Panc1 (cell line): ENCODE measurements at regions of chr20 and their contacts with region 1.

Region 1: GRCh38 chr20:1240549-1240948 is 14.7 kb downstream of the RAD21L1 start:
- DNase-seq: no peak
- ATAC-seq: no peak
- H3K4me3 ChIP-seq: no peak overlapping the region
- H3K27ac ChIP-seq: no peak overlapping the region
- H3K4me1 ChIP-seq: no peaks in the 10 kb centered on the region
- H3K27me3 ChIP-seq: no peaks in the 10 kb centered on the region
- CTCF ChIP-seq: no peak

Region 2: GRCh38 chr20:1072258-1072657 is 168.3 kb before region 1 on chr20:
- CTCF ChIA-PET with region 1: no interaction called
- POLR2A ChIA-PET with region 1: no interaction called
- in situ Hi-C with region 1: no loop called
- intact Hi-C with region 1: no loop called
- DNase-seq: no peak
- ATAC-seq: no peak
- H3K4me3 ChIP-seq: no peak overlapping the region
- H3K27ac ChIP-seq: no peak overlapping the region
- H3K4me1 ChIP-seq: no peaks in the 10 kb centered on the region
- H3K27me3 ChIP-seq: peaks cover 2% of the 10 kb centered on the region
- CTCF ChIP-seq: no peak

Region 3: GRCh38 chr20:1274485-1275311 is 34.1 kb after region 1 on chr20:
- CTCF ChIA-PET with region 1: no interaction called
- POLR2A ChIA-PET with region 1: no interaction called
- in situ Hi-C with region 1: no loop called
- intact Hi-C with region 1: no loop called
- DNase-seq: no peak
- ATAC-seq: peak; percentile 47
- H3K4me3 ChIP-seq: no peak overlapping the region
- H3K27ac ChIP-seq: no peak overlapping the region
- H3K4me1 ChIP-seq: no peaks in the 10 kb centered on the region
- H3K27me3 ChIP-seq: no peaks in the 10 kb centered on the region
- CTCF ChIP-seq: no peak

Region 4: GRCh38 chr20:1450926-1451491 is 210.5 kb after region 1 on chr20:
- CTCF ChIA-PET with region 1: no interaction called
- POLR2A ChIA-PET with region 1: interaction called, 12 read pairs
- in situ Hi-C with region 1: no loop called
- intact Hi-C with region 1: no loop called
- DNase-seq: no peak
- ATAC-seq: no peak
- H3K4me3 ChIP-seq: no peak overlapping the region
- H3K27ac ChIP-seq: no peak overlapping the region
- H3K4me1 ChIP-seq: no peaks in the 10 kb centered on the region
- H3K27me3 ChIP-seq: no peaks in the 10 kb centered on the region
- CTCF ChIP-seq: no peak